Dendritic cell treated with granulocyte-macrophage colony-stimulating factor and Interleukin-4, amounts not matched to agents 40 ng/mL and 50 ng/mL, for 4 days (primary cell): ENCODE measurements at regions of chr16 and their contacts with region 1.

Region 1: DNA sequence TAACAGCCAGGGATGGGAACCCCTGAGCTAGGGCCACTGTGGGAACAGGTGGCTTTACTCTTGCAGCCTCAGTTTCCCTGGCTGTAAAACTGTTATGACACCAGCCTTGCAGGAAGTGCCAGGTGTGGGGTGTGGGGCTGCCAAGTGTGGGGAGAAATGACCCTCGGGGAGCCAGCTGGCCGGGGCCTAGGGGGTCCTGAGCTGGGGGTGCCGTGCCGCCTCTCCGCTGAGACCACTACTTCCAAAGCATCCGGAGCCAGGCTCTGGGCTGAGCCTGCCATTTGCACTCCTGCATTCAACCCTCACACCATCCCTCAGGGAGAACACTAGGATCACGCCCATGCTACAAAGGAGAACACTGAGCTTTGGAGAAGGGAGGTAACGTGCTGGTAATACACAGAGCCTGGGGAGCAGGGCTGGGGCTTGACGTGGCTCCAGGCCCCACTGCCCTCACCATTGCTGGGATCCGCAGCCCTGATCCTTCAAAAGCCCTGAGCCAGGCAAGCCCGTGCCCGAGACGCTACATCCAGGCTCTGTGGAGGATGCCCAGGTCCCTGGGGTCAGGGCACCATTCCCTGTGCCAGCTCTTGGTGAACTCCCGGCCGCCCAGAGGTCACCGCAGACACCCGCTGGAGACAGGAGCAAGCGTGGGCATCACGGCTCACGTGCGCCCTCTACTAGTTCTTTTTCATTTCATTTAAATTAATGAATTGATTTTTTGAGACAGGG is 28.8 kb upstream of the GINS2 start:
- H3K4me3 Mint-ChIP-seq: no peak overlapping the region
- H3K27ac Mint-ChIP-seq: no peak overlapping the region
- H3K4me1 Mint-ChIP-seq: peaks cover 13% of the 10 kb centered on the region
- H3K27me3 Mint-ChIP-seq: peaks cover 15% of the 10 kb centered on the region

Region 2: GRCh38 chr16:85675251-85675927 is 42.2 kb before region 1 on chr16:
- intact Hi-C with region 1: loop called (anchors 1 kb)
- H3K4me3 Mint-ChIP-seq: no peak overlapping the region
- H3K27ac Mint-ChIP-seq: no peak overlapping the region
- H3K4me1 Mint-ChIP-seq: no peaks in the 10 kb centered on the region
- H3K27me3 Mint-ChIP-seq: no peaks in the 10 kb centered on the region

Region 3: GRCh38 chr16:85750827-85751697 is 33.5 kb after region 1 on chr16 and contains the start of gene C16orf74:
- intact Hi-C with region 1: no loop called
- H3K4me3 Mint-ChIP-seq: peak within 1 kb of the TSS; percentile 76
- H3K27ac Mint-ChIP-seq: peak within 1 kb of the TSS; percentile 45
- H3K4me1 Mint-ChIP-seq: peaks cover 7% of the 10 kb centered on the region
- H3K27me3 Mint-ChIP-seq: peaks cover 46% of the 10 kb centered on the region